ENCODE measurements at regions of chr9 and their contacts with region 1.

Region 1: DNA sequence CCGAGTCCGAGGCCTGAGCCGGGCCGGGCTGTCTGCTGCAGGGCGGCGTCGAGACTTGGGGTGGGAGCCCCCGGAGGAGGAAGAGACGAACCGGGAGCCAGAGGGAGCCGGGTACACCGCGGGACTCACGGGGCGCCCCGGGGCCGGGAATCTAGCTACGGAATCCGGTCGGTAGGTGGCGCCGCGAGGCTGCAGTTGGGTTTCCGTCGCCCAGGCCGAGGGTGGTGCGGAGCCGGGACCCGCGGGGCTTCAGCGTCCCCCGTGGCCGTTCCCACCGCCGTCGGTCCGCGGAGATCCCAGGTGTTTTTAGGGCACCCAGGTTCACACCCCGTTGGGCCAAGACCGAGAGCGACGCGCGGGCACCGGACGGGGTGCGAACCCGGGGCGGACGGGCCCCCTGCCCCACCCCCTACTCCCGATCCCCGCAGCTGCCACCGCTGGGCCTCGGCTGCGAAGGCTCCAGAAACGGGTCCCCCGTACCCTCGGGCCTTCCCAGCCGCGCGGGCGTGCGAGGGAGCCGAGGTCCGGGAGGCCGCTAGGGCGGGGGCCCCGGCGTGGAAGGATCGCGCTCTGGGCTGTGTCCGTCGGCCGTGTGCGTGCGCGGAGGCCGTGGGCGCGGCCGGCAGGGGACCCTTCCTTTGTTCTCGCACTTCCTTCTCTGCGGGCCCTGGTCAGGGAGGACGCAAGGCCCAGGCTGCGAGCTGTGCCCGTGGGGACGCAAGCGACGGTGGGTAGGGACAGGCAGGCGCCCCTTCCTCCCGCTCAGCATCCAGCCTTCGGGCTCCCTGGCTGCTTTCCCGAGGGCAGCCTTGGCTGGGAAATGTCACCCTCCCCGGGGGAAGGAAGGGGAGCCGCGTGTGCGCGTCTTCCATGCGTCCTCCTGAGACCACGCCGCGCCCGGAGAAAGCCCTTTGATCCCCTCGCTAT is 146.6 kb downstream of the GAPVD1 start:
- DNase-seq: peak; percentile 94
- CTCF ChIP-seq: peak; percentile 77

Region 2: GRCh38 chr9:125261501-125262293 is 146.5 kb before region 1 on chr9 and contains the start of gene GAPVD1:
- in situ Hi-C with region 1: no loop called
- DNase-seq: peak; percentile 99
- CTCF ChIP-seq: peak; percentile 26

Region 3: DNA sequence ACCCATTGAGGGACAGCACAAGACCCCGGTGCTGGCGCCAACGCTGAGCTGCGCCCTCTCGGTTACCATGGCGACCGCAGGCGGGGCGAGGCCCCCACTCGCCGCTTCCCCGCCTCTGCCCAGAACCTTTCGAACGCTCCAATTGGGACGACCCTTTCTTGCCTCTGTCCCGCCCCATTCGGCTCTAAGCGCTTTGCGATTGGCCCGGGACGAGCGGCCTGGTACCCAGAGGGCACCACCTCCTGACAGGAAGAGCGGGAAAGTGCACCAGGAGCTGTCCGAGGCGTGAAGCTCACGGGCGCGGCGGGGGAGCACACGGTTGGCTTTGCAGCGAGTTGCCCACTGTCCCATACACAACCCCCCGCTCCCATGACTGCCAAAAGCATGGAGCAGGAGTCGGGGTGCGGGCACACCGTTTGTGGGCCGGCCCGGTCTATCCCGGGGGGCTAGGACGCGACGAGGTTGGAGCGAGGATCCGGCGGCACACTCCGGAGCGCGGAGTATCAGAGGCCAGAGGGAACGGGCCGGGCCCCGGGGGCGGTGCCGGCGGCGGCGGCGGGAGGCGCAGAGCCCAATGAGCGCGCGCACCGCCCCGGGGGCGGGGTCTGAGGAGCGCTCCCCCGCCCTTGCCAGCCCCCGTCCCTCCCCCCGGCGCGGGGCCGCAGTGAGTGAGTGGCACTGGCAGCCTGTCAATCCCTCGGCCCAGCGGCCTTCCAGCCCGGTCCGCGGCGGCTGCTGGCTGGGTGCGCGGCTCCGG is 338.0 kb after region 1 on chr9:
- in situ Hi-C with region 1: loop called (anchors 25 kb)
- DNase-seq: peak; percentile 95
- CTCF ChIP-seq: no peak

Region 4: DNA sequence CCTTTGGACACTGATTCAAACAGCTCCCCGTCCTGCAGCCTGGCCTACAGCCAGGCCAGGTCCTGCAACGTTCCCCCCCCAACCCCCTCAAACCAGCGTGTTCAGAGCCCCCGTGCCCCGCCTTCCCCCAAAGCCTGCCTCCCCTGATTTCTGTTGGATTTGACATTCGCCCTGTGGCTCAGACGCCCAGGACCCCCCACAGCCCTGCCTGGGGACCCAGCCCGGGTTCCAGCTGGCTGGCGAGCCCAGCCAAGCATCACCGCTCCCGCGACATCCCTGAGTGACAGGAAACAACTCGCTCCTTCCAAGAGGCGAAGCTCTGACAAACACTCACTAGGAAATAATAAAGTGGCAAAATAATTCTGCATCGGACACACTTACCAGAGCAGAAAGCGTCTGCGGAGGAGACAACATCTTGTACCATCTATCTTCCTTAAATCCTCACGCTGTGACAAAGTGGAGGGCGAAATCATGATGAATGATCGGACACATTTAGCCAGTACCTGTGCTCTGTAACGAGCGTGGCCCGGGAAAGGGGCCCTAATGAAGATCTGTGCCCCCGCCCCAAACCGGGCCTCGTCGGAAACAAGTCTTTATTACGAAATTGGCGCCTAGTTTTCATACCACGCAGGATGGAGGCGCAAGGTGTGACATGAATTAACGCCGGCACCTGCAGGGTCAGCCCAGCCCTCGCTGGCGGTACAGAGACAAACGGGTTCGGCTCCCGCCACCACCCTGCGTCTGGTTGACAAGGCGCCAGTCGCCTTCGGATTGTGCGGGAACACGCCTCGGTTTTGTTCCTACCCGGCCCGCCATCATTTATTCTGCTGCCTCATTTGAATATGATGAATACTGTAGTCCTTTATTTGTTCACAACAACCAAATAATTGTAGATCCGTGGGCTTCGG is 827.4 kb after region 1 on chr9:
- in situ Hi-C with region 1: loop called (anchors 10 kb)
- DNase-seq: no peak
- CTCF ChIP-seq: no peak

Region 5: GRCh38 chr9:126411225-126411947 is 1003.1 kb after region 1 on chr9:
- in situ Hi-C with region 1: loop called (anchors 25 kb)
- DNase-seq: peak; percentile 78
- CTCF ChIP-seq: no peak